PC-3 (cell line): ENCODE measurements at regions of chr6 and their contacts with region 1.

Region 1: GRCh38 chr6:116570856-116571682 is at the start of gene RWDD1:
- DNase-seq: peak; percentile 93
- ATAC-seq: peak; percentile 96
- H3K4me3 ChIP-seq: peak within 1 kb of the TSS; percentile 98
- H3K27ac ChIP-seq: peak within 1 kb of the TSS; percentile 53
- H3K4me1 ChIP-seq: peaks cover 17% of the 10 kb centered on the region
- H3K27me3 ChIP-seq: no peaks in the 10 kb centered on the region
- CTCF ChIP-seq: no peak
- total RNA-seq, gene RWDD1: 18.4 and 24.6 TPM in 2 replicates

Region 2: GRCh38 chr6:116511404-116512110 is 59.5 kb before region 1 on chr6 and contains the start of gene CALHM5:
- CTCF ChIA-PET with region 1: no interaction called
- POLR2A ChIA-PET with region 1: no interaction called
- intact Hi-C with region 1: no loop called
- DNase-seq: peak; percentile 83
- ATAC-seq: peak; percentile 81
- H3K4me3 ChIP-seq: no peak within 1 kb of the TSS
- H3K27ac ChIP-seq: no peak within 1 kb of the TSS
- H3K4me1 ChIP-seq: 0 out of 2 replicates have a peak, but pooled peaks cover 5% of the 10 kb centered on the region
- H3K27me3 ChIP-seq: no peaks in the 10 kb centered on the region
- CTCF ChIP-seq: peak; percentile 71
- total RNA-seq, gene CALHM5: not detected in 2 replicates

Region 3: GRCh38 chr6:116615937-116616736 is 45.1 kb after region 1 on chr6 and contains the start of gene RSPH4A:
- CTCF ChIA-PET with region 1: no interaction called
- POLR2A ChIA-PET with region 1: no interaction called
- intact Hi-C with region 1: loop called (anchors 2 kb)
- DNase-seq: peak; percentile 91
- ATAC-seq: peak; percentile 100
- H3K4me3 ChIP-seq: peak within 1 kb of the TSS; percentile 76
- H3K27ac ChIP-seq: no peak within 1 kb of the TSS
- H3K4me1 ChIP-seq: no peaks in the 10 kb centered on the region; the same call in 1 of the 2 replicates
- H3K27me3 ChIP-seq: no peaks in the 10 kb centered on the region
- CTCF ChIP-seq: peak; percentile 33; the same call in 1 of the 2 replicates
- total RNA-seq, gene RSPH4A: 0.04 TPM in 1 of 2 replicates, not detected in the other

Region 4: DNA sequence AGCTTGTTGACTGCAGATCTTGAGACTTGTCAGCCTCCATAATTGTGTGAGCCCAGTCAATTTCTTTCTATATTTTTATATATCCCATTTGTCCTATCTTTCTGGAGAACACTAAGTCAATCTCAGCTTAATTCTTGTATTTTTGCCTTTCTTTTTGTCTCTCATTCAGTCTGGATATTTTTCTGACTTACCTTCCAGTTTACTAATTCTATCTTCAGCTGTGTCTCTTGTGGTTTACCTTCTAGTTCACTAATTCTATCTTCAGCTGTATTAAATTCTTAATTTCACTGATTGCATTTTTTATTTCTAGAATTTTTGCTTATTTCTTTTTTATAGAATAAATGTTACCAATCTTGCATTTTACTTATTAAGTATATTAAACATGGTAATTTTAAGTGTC is 288.2 kb after region 1 on chr6:
- CTCF ChIA-PET with region 1: no interaction called
- POLR2A ChIA-PET with region 1: no interaction called
- intact Hi-C with region 1: no loop called
- DNase-seq: no peak
- ATAC-seq: no peak
- H3K4me3 ChIP-seq: no peak overlapping the region
- H3K27ac ChIP-seq: no peak overlapping the region
- H3K4me1 ChIP-seq: no peaks in the 10 kb centered on the region
- H3K27me3 ChIP-seq: no peaks in the 10 kb centered on the region
- CTCF ChIP-seq: no peak